ENCODE measurements at regions of chr1 and their contacts with region 1.

Region 1: GRCh38 chr1:11985851-11986250 is 5.6 kb downstream of the MFN2 start:
- DNase-seq: no peak
- ATAC-seq: no peak
- H3K4me3 Mint-ChIP-seq: no peak overlapping the region
- H3K27ac Mint-ChIP-seq: peak overlapping the region; percentile 89
- H3K4me1 Mint-ChIP-seq: peaks cover 21% of the 10 kb centered on the region
- H3K27me3 Mint-ChIP-seq: no peaks in the 10 kb centered on the region
- CTCF ChIP-seq: no peak

Region 2: GRCh38 chr1:11893907-11894251 is 92.0 kb before region 1 on chr1:
- CTCF ChIA-PET with region 1: no interaction called
- POLR2A ChIA-PET with region 1: no interaction called
- DNase-seq: peak; percentile 87
- ATAC-seq: peak; percentile 91
- H3K4me3 Mint-ChIP-seq: no peak overlapping the region
- H3K27ac Mint-ChIP-seq: no peak overlapping the region
- H3K4me1 Mint-ChIP-seq: no peaks in the 10 kb centered on the region
- H3K27me3 Mint-ChIP-seq: no peaks in the 10 kb centered on the region; the same call in 1 of the 2 replicates
- CTCF ChIP-seq: peak; percentile 77

Region 3: DNA sequence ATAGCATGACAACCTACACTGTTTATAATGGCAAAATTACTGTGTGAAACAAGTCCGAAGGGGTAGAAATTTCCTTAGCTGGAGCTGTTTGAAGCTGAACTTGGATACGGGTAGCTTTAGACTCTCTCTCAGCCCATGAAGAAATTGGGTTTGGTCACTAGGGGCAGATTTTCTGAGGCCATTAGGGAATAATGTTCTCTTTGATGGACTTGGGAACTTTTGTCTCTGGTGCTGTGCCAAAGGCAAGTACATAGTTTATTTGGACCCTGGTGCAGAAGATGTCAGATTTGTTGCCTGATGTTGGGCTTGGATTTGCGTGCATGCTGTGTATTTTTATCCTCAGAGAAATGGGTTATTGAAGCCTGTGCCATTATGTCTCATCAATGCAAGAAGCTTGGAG is 353.5 kb after region 1 on chr1:
- CTCF ChIA-PET with region 1: interaction called, 10 read pairs
- POLR2A ChIA-PET with region 1: no interaction called
- DNase-seq: no peak
- ATAC-seq: peak; percentile 65
- H3K4me3 Mint-ChIP-seq: no peak overlapping the region
- H3K27ac Mint-ChIP-seq: no peak overlapping the region
- H3K4me1 Mint-ChIP-seq: peaks cover 25% of the 10 kb centered on the region
- H3K27me3 Mint-ChIP-seq: no peaks in the 10 kb centered on the region
- CTCF ChIP-seq: no peak

Measured in WTC11 (cell line).